ENCODE measurements at regions of chr16 and their contacts with region 1.

Region 1: GRCh38 chr16:58629572-58630104 is at the start of gene CNOT1:
- DNase-seq: peak; percentile 100
- H3K4me3 ChIP-seq: peak within 1 kb of the TSS; percentile 78 to 99 (median 97)
- H3K27ac ChIP-seq: peak within 1 kb of the TSS; percentile 95
- H3K4me1 ChIP-seq: peaks cover 14% of the 10 kb centered on the region
- H3K27me3 ChIP-seq: no peaks in the 10 kb centered on the region
- CTCF ChIP-seq: no peak
- POLR2A ChIP-seq: peak; percentile 91
- total RNA-seq, gene CNOT1: 150 and 151 TPM in 2 replicates

Region 2: GRCh38 chr16:57899771-57900661 is 729.6 kb before region 1 on chr16:
- CTCF ChIA-PET with region 1: no interaction called
- POLR2A ChIA-PET with region 1: no interaction called
- dilution Hi-C with region 1: no loop called
- intact Hi-C with region 1: loop called (anchors 10 kb)
- DNase-seq: peak; percentile 67
- H3K4me3 ChIP-seq: no peak overlapping the region
- H3K27ac ChIP-seq: no peak overlapping the region
- H3K4me1 ChIP-seq: no peaks in the 10 kb centered on the region
- H3K27me3 ChIP-seq: peaks cover 0 to 3% of the 10 kb centered on the region in 2 experiments
- CTCF ChIP-seq: peak; percentile 85 to 87
- POLR2A ChIP-seq: no peak

Region 3: DNA sequence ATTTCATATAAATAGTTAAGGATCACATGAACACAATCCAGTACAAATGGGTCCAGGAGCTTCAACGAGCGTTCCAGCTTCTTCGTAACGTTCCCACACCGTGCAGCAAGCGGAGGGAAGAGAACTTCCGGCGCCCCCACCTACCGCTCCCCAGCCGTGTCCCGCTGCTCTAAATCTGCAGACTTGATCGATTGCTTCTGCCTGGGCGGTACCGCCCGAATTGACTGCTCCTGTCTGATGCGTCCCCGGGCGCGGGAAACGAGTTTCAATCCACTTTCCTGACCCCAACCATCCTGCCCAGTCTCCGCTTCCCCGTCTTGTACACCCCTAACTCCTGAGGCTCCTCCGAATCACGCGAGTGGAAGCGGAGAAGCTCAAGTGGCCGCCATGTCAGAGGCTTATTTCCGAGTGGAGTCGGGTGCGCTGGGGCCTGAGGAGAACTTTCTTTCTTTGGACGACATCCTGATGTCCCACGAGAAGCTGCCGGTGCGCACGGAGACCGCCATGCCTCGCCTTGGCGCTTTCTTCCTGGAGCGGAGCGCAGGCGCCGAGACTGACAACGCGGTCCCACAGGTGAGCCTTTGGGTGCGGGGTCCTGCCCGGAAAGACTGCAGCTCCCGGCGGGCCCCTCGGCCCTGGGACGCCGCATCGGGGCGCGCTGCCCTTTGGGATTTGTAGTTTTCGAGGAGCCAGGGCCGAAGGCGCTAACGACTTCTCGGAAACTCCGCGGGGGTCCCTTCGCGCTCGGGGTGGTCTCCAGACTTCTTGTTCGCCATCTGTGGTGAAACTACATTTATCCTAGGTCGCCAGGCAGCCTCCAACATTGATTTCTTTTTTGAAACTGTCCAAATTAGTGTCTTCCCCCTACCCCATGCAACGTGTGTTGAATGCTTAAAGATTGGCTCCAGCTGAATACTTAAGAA is 237.2 kb before region 1 on chr16 and contains the start of gene GINS3:
- CTCF ChIA-PET with region 1: no interaction called
- POLR2A ChIA-PET with region 1: no interaction called
- dilution Hi-C with region 1: no loop called
- intact Hi-C with region 1: loop called (anchors 1 kb)
- DNase-seq: peak; percentile 82
- H3K4me3 ChIP-seq: peak within 1 kb of the TSS; percentile 89 to 96 (median 95)
- H3K27ac ChIP-seq: peak within 1 kb of the TSS; percentile 79
- H3K4me1 ChIP-seq: peaks cover 9% of the 10 kb centered on the region
- H3K27me3 ChIP-seq: no peaks in the 10 kb centered on the region
- CTCF ChIP-seq: no peak
- POLR2A ChIP-seq: no peak
- total RNA-seq, gene GINS3: 24.1 and 29.0 TPM in 2 replicates

Region 4: DNA sequence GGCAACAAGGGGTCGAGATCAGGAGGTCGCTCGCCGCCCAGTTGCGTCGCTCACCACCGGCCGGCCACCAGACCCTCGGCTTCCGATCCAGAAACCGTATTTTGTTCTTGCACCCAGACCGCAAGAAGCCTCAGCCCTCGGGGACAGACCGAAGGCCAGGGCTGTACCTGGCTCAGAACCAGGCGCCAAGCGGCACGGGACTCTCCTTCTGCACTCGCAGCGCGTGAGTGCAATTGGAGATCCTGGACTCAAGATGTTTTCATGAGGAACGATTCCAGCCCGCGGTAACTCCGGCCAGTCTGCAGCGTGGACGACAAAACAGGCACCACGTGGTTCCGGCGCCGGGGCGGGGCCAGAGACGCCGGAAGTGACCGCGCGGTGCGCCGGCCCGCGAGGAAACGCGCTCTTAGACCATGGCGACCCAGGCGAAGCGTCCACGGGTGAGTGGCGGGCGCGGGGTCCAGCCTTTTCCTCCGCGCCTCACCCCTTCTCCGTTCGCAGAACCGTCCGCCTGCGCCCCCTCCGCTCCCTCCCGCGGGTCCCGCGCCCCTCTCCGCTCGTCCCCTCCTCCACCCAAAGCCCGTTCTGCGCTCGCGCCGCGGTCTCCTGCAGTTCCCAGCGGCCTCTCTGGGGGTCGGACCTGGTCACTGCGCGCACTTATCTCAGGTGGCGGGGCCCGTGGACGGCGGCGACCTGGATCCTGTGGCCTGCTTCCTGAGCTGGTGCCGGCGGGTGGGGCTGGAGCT is 114.3 kb before region 1 on chr16 and contains the start of gene SETD6:
- CTCF ChIA-PET with region 1: interaction called, 3 read pairs
- POLR2A ChIA-PET with region 1: no interaction called
- dilution Hi-C with region 1: no loop called
- intact Hi-C with region 1: loop called (anchors 5 kb)
- DNase-seq: peak; percentile 90
- H3K4me3 ChIP-seq: peak within 1 kb of the TSS; percentile 32 to 70 (median 63)
- H3K27ac ChIP-seq: peak within 1 kb of the TSS; percentile 50
- H3K4me1 ChIP-seq: peaks cover 12% of the 10 kb centered on the region
- H3K27me3 ChIP-seq: no peaks in the 10 kb centered on the region
- CTCF ChIP-seq: peak in 1 of 2 donors; percentile 23
- POLR2A ChIP-seq: peak; percentile 80
- total RNA-seq, gene SETD6: 10.4 and 16.4 TPM in 2 replicates

Region 5: GRCh38 chr16:58684354-58685083 is 54.9 kb after region 1 on chr16 and contains the start of gene SLC38A7:
- CTCF ChIA-PET with region 1: no interaction called
- POLR2A ChIA-PET with region 1: no interaction called
- dilution Hi-C with region 1: no loop called
- intact Hi-C with region 1: loop called (anchors 2 kb)
- DNase-seq: peak; percentile 86
- H3K4me3 ChIP-seq: peak within 1 kb of the TSS; percentile 62 to 95 (median 76)
- H3K27ac ChIP-seq: peak within 1 kb of the TSS; percentile 58
- H3K4me1 ChIP-seq: peaks cover 10% of the 10 kb centered on the region
- H3K27me3 ChIP-seq: no peaks in the 10 kb centered on the region
- CTCF ChIP-seq: no peak
- POLR2A ChIP-seq: peak; percentile 75
- total RNA-seq, gene SLC38A7: 44.4 and 45.5 TPM in 2 replicates

Region 6: DNA sequence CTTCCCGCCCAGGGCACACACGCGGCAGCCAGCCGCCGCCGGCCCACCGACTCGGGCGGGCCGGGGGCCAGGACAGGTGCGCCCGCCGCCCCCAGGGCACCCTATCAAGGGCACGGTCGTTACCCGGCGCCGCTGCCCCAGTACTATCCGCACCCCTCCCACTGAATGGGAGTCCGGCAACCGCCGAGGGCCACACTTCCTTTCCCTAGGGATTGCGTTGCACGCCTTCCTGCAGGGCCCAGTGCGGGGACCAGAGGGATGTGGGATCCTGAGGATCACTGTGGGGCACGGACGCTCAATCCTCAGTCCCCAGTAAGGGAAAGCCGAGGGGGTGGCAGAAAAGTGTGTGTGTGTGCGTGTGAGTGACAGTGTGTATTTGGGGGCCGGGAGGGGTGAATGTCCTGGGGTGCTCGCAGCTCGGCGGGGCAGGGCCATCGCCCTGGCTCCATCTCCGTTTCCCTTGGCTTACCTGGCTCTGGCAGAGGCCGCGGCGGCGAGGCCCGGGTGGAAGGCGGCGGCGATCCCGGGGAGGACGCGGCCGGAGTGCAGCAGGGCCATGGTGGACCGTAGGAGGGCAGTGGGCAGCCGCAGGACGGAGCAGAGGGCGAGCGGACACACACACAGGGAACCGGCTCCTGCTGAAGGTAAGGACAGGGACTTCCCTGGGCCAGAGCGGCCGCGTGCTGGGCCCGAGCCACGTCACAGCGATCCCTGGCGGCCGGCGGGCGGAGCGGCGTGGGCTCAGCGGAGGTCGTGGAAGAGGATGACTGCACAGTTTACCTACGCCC is 104.2 kb after region 1 on chr16 and contains the start of gene GOT2:
- CTCF ChIA-PET with region 1: no interaction called
- POLR2A ChIA-PET with region 1: no interaction called
- dilution Hi-C with region 1: no loop called
- intact Hi-C with region 1: loop called (anchors 1 kb)
- DNase-seq: peak; percentile 93
- H3K4me3 ChIP-seq: peak within 1 kb of the TSS; percentile 63 to 84 (median 72)
- H3K27ac ChIP-seq: peak within 1 kb of the TSS; percentile 98
- H3K4me1 ChIP-seq: peaks cover 26% of the 10 kb centered on the region
- H3K27me3 ChIP-seq: no peaks in the 10 kb centered on the region
- CTCF ChIP-seq: peak; percentile 97 to 98
- POLR2A ChIP-seq: peak; percentile 73
- total RNA-seq, gene GOT2: 120 and 127 TPM in 2 replicates

Measured in endothelial cell of umbilical vein (primary cell).